Heart left ventricle (tissue), 16 donors: ENCODE measurements at regions of chr17 and their contacts with region 1.

Region 1: DNA sequence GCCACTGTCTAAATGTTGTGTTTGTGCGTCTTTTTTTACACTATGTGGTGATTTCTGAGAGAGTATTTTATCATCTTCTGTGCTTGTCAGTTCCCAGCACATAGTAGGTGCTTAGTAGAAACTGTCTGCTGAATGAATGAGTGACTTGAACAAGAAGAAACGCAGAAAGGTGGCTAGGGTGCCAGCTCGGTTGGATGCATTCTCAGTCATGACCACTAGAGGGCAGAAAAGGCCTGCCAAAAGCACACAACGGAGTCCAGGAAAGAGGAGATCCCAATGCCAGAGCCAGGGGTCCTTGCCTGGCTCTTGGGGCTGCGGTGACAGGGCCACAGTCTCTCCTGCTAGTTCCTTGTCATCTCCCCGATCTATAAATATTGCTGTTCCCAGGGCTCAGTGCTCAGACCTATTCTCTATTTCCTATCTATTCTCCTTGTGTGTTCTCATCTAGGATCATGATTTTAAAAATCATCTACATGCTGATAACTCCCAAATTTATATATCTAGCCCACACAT is 57.3 kb upstream of the CCL1 start:
- DNase-seq: peak in 4 of 5 donors; percentile 39 to 54 (median 48)
- ATAC-seq: peak; percentile 61 to 74 (median 68)
- H3K4me3 ChIP-seq: no peak overlapping the region
- H3K27ac ChIP-seq: no peak overlapping the region
- H3K4me1 ChIP-seq: peaks cover 0 to 6% (median 0%) of the 10 kb centered on the region in 12 donors
- H3K27me3 ChIP-seq: peaks cover 7 to 66% (median 38%) of the 10 kb centered on the region in 9 donors
- CTCF ChIP-seq: peak; percentile 91 to 98 (median 94)
- POLR2A ChIP-seq: no peak

Region 2: DNA sequence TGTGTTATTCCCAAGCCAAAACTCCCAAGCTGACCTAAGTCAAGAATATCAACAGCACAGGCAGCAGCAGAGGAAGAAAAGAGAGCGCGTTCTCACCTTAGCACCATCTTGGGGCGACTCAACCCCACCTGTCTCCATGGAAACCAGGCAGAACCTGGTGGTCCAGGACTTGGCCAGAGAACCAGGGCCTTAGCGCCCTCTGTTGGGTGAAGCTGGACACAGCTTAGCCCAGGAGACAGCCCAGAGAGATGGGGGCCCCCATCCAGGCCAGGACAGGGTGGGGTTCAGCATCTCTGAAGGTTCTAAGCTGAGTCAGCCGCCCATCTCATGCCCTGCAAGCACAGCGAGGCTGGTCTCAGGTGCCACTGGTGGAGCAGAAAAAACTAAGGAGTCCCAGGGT is 99.0 kb after region 1 on chr17:
- intact Hi-C with region 1: loop called in 4 of 10 experiments (anchors 5 to 10 kb)
- DNase-seq: no peak
- ATAC-seq: no peak
- H3K4me3 ChIP-seq: no peak overlapping the region
- H3K27ac ChIP-seq: no peak overlapping the region
- H3K4me1 ChIP-seq: no peaks in the 10 kb centered on the region
- H3K27me3 ChIP-seq: peaks cover 0 to 34% (median 13%) of the 10 kb centered on the region in 9 donors
- CTCF ChIP-seq: peak in 11 of 12 donors; percentile 12 to 55 (median 40)
- POLR2A ChIP-seq: no peak

Region 3: GRCh38 chr17:34527908-34528470 is 107.7 kb after region 1 on chr17:
- intact Hi-C with region 1: loop called in 2 of 10 experiments (anchors 5 to 10 kb)
- DNase-seq: no peak
- ATAC-seq: no peak
- H3K4me3 ChIP-seq: no peak overlapping the region
- H3K27ac ChIP-seq: no peak overlapping the region
- H3K4me1 ChIP-seq: peaks cover 0 to under 1% (median 0%) of the 10 kb centered on the region in 12 donors
- H3K27me3 ChIP-seq: peaks cover 0 to 66% (median 28%) of the 10 kb centered on the region in 9 donors
- CTCF ChIP-seq: no peak
- POLR2A ChIP-seq: no peak

Region 4: DNA sequence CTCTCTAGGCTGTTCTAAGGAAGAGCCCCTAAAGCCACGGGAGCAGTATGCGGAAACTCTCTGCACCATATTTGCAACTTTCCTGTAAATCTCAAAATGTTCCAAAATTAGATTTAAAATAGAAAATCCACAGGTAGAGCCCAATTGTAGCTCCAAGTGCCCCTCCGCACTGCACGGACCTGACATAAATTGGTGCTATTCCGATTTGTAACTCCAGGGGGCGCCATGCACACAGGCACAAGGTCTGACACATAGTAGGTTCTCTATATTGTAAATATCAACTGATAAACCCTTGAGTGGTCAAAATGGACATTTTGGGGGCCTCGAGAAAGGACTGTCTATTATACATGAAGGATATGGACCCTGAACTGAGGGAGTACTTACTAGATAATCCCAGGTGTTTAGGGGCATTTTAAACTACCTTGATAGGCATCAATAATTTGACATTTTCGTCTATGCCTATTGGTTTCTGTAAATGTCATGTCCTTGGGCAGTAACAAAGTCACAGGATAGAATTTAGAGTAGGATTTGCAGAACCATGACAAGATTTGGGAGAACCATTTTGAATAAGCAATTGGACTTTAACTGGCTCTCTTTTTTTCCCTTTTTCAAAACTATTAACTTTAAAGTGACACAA is 122.5 kb after region 1 on chr17:
- intact Hi-C with region 1: loop called in 1 of 10 experiments (anchors 5 kb)
- DNase-seq: peak in 1 of 5 donors; percentile 44
- ATAC-seq: no peak
- H3K4me3 ChIP-seq: no peak overlapping the region
- H3K27ac ChIP-seq: no peak overlapping the region
- H3K4me1 ChIP-seq: no peaks in the 10 kb centered on the region
- H3K27me3 ChIP-seq: peaks cover 0 to 58% (median 15%) of the 10 kb centered on the region in 9 donors
- CTCF ChIP-seq: peak; percentile 63 to 91 (median 79)
- POLR2A ChIP-seq: no peak

Region 5: DNA sequence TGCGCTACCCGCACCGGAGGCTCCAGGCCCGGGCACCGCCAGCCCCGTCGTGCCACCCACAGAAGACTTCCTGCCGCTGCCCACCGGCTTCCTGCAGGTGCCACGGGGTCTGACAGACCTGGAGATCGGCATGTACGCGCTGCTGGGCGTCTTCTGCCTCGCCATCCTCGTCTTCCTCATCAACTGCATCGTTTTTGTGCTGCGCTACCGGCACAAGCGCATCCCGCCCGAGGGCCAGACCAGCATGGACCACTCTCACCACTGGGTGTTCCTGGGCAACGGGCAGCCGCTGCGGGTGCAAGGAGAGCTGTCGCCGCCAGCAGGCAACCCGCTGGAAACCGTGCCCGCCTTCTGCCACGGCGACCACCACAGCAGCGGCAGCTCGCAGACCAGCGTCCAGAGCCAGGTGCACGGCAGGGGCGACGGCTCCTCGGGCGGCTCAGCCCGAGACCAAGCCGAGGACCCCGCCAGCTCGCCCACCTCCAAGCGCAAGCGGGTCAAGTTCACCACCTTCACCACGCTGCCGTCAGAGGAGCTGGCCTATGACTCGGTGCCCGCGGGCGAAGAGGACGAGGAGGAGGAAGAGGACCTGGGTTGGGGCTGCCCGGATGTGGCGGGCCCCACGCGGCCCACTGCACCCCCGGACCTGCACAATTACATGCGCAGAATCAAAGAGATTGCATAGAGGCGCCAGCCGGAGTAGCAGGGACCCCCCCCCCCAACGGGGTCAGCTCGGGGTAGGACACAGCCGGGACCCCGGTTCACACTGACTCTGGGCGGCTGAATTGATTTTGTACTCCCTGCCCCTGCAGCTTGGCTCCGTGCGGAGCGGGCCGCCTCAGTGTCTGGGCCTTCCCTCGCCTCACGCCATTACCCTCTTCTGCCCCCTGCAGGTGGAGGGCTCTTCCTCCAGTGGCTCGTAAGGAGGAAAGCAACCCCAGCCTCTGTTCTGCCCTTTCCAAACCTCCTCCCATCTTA is 217.5 kb after region 1 on chr17:
- intact Hi-C with region 1: loop called (anchors 1 to 5 kb)
- DNase-seq: peak; percentile 70 to 87 (median 75)
- ATAC-seq: peak; percentile 77 to 97 (median 92)
- H3K4me3 ChIP-seq: peak overlapping the region; percentile 21 to 57 (median 44)
- H3K27ac ChIP-seq: no peak overlapping the region
- H3K4me1 ChIP-seq: peaks cover 0 to 12% (median 5%) of the 10 kb centered on the region in 12 donors
- H3K27me3 ChIP-seq: peaks cover 0 to 72% (median 21%) of the 10 kb centered on the region in 9 donors
- CTCF ChIP-seq: peak; percentile 68 to 90 (median 78)
- POLR2A ChIP-seq: no peak

Region 6: DNA sequence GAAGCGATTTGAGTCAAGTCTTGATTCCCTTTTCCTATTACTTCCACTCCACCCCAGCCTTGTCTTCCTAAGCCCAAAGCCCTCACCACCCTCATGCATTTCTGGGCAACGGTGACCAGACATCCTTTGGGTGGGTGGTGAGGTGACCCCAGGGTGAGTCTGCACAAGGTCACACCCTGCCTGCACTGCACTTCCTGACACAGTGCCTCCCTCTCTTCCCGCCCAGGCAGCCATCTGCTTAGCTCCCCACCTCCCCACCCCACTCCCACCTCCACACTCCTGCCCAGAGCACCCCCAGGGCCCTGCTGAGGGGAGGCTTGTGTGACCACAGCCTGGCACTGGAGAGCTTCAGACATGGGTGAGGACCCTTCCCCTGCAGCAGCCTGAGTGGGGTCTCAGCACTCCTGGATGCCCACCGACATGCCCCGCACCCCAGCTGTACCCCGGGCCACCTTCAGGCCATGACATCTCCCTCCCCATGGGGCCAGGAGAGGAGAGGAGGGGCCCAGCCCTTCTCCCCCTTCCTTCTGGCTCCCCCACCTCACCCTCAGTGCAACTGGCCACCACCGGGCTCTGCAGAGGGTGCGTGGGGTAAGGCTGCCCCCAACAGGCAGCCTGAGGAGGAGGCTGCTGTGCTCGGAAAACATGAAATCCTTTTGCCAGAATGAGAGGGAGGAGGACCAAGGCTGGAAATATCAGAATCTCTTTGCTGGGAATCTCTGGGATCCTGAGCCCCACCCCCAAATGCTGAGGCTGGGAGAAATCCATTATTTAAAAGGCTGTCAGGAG is 472.3 kb after region 1 on chr17:
- intact Hi-C with region 1: loop called in 2 of 10 experiments (anchors 10 kb)
- DNase-seq: no peak
- ATAC-seq: peak in 3 of 4 donors; percentile 55 to 64 (median 61)
- H3K4me3 ChIP-seq: no peak overlapping the region
- H3K27ac ChIP-seq: no peak overlapping the region
- H3K4me1 ChIP-seq: no peaks in the 10 kb centered on the region
- H3K27me3 ChIP-seq: peaks cover 0 to 74% (median 16%) of the 10 kb centered on the region in 9 donors
- CTCF ChIP-seq: peak in 11 of 12 donors; percentile 11 to 57 (median 41)
- POLR2A ChIP-seq: no peak

Region 7: DNA sequence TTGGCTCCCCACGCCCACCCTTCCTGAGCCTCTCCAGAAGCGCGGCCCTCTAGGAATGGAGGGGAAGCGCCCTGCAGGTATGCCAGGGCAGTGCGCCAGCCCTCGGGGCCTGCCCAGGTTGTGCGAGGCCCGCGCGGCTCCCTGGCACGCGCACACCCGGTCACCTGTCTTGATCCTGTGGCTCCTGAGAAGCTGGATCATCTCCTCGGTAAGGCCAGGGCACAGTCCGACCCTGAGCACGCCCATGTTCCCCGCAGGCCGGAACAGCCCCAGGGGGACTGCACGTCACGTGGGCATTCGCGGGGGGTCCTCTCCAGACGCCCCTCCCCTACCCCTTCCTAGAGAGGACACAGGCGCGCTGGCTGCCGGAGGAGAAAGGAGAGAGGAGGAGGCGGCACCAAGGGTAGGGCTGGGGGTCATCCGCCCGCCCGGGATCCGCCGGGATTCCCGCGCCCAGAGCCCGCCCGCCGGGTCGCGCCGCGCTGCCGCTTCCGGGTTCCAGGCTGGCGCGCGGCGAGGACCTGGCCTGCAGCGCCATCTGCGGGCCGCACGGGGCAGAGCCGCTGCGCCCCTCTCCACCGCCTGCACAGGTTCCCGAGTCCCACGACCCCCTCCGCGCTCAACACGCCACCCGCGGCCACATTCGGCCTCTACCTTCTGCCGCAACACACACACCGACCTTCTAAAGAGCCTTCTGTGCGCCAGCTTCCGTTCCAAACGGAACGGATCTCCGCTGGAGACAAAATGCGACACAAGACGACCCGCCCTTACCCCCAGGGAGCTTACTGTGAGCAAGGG is 699.3 kb after region 1 on chr17 and contains the start of gene RAD51D:
- intact Hi-C with region 1: loop called (anchors 1 to 10 kb)
- DNase-seq: peak; percentile 67 to 88 (median 73)
- ATAC-seq: peak; percentile 62 to 98 (median 95)
- H3K4me3 ChIP-seq: peak within 1 kb of the TSS; percentile 51 to 99 (median 90)
- H3K27ac ChIP-seq: peak within 1 kb of the TSS in 11 of 12 donors; percentile 8 to 86 (median 75)
- H3K4me1 ChIP-seq: peaks cover 0 to 20% (median 10%) of the 10 kb centered on the region in 12 donors
- H3K27me3 ChIP-seq: no peaks in the 10 kb centered on the region
- CTCF ChIP-seq: peak; percentile 67 to 98 (median 94)
- POLR2A ChIP-seq: peak in 1 of 2 donors; percentile 39
- total RNA-seq, gene RAD51D: 2.7 to 9.2 (median 5.0) TPM